ENCODE measurements at regions of chr12 and their contacts with region 1.

Region 1: DNA sequence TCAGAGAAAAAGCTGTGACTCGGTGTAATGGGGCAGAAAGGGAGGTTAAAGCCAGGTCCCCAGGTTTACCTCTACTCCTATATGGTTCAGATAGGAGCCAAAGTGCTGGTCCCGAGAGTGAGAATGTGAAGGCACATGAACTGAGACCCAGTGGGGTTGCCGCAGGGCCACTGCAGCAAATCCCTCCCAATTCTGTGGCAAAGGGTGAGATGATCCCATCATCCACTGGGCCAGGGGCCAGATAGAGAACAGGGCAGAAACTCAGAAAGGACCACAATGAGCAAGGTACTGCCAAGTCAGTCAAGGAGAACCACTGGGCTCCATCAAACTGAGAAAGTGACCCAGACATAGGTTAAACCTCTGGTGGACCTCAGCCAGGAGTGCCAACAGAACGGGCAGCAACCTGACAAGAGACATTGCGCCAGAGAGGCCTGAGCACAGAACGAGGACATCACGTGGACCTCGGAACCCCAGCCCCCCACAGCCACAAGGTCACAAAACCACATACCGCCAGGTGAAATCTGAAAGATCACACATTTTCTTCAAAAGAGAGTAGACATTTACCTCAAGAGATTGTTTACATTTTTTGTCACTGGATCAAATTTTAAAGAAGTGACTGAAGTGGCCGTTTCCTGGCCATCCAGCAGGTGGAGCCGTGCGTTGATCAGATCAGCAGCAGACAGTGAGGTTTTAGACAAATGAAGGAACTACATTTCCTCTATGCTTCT is 20.5 kb upstream of the ITPR2 start:
- DNase-seq: no peak
- H3K4me3 ChIP-seq: no peak overlapping the region
- CTCF ChIP-seq: peak; percentile 77

Region 2: DNA sequence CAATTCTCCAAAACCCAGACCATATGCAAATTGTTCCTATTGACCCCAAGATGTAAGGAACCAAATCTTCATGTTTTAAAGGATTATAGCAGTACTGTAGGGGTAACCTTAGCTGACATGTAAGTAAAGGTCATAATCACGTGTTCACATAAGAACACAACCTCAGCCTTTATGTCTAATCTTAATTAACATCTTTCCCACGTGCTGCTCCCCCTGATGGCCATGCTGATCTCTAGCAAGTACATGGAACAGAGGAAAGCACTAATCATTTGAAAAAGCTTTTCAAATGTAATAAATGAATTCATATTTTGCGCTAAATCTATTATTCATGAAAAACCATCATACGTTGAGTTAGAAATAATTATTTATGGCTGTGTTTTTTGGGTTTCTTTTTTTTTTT is 10.0 kb after region 1 on chr12:
- CTCF ChIA-PET with region 1: interaction called, 12 read pairs
- POLR2A ChIA-PET with region 1: no interaction called
- DNase-seq: no peak
- H3K4me3 ChIP-seq: no peak overlapping the region
- CTCF ChIP-seq: peak; percentile 6